Mammary epithelial cell (primary cell): ENCODE measurements at regions of chr17 and their contacts with region 1.

Region 1: GRCh38 chr17:19317359-19318095 is 45.0 kb downstream of the B9D1 start:
- DNase-seq: no peak
- H3K4me3 ChIP-seq: no peak overlapping the region
- H3K27ac ChIP-seq: no peak overlapping the region
- H3K4me1 ChIP-seq: peaks cover 2% of the 10 kb centered on the region
- H3K27me3 ChIP-seq: no peaks in the 10 kb centered on the region
- CTCF ChIP-seq: peak in 1 of 2 donors; percentile 35

Region 2: DNA sequence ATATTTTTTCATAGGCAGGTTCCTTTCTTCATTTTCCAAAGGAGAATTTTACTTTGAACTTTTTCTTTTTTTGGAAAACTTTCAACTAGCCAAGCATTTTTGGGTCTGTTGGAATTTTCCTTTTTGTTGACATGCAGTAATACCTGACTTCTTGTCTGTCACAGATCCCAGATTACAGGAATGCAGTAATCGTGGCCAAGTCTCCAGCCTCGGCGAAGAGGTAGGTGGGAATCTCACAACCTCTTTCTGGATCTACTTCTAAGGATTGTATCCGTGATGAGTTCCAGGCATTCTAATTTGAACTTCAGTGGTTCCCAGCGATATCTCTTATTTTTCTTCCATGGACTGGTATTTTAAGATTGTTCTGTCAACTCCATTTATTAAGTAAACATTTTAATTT is 427.9 kb before region 1 on chr17:
- CTCF ChIA-PET with region 1: no interaction called
- dilution Hi-C with region 1: no loop called
- in situ Hi-C with region 1: no loop called
- intact Hi-C with region 1: no loop called
- DNase-seq: no peak
- H3K4me3 ChIP-seq: no peak overlapping the region
- H3K27ac ChIP-seq: no peak overlapping the region
- H3K4me1 ChIP-seq: no peaks in the 10 kb centered on the region
- H3K27me3 ChIP-seq: no peaks in the 10 kb centered on the region
- CTCF ChIP-seq: no peak

Region 3: GRCh38 chr17:19260958-19261357 is 56.6 kb before region 1 on chr17:
- CTCF ChIA-PET with region 1: no interaction called
- dilution Hi-C with region 1: loop called (anchors 5 kb)
- in situ Hi-C with region 1: no loop called
- intact Hi-C with region 1: no loop called
- DNase-seq: peak; percentile 20
- H3K4me3 ChIP-seq: no peak overlapping the region
- H3K27ac ChIP-seq: no peak overlapping the region
- H3K4me1 ChIP-seq: peaks cover 6% of the 10 kb centered on the region
- H3K27me3 ChIP-seq: no peaks in the 10 kb centered on the region
- CTCF ChIP-seq: peak; percentile 6 to 21

Region 4: DNA sequence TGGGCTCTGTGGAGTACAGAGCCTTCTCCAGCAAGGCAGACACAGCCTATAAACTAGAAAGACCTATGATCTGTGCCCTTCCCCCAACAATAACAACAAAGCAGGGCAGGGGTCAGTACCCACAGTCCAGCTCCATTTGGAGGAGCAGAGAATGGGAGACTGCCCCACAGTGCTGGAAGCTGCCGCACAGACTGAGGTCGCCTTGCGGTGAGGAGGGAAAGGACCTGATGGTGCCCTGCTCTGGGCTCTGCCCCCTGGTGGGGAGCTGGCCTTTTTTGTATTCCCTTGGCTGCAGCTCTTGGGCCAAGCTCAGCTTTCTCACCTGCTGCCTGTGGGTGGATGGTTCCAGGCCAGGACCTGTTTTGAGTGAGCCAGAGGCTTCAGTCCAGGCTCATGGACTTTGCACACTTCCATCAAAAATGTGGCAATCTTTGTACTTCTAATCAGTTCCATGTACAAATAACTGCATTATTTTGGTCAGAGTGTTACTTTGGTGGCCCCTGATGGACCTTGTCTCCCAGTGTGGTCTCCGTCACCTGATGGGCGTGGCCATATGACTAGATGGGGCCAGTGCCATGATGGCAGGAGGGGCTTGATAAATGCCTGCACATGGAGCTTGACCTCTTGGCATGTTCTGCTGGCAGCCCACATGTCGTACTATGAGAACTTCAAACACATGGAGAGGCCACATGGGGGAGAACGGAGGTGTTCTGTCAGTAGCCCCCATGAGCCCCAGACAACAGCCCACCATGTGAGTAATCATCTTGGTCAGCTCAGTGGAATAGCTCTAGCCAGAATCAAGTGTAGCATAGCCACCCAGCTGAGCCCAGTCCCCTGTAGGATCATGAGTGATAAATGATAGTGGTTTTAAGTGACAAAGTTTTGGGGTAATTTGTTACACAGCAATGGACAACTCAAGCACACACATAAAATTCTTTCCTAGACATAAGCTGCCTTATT is 20.8 kb after region 1 on chr17:
- CTCF ChIA-PET with region 1: no interaction called
- dilution Hi-C with region 1: no loop called
- in situ Hi-C with region 1: no loop called
- intact Hi-C with region 1: loop called (anchors 2 kb)
- DNase-seq: peak; percentile 50
- H3K4me3 ChIP-seq: no peak overlapping the region
- H3K27ac ChIP-seq: no peak overlapping the region
- H3K4me1 ChIP-seq: no peaks in the 10 kb centered on the region
- H3K27me3 ChIP-seq: no peaks in the 10 kb centered on the region
- CTCF ChIP-seq: peak; percentile 26 to 49

Region 5: DNA sequence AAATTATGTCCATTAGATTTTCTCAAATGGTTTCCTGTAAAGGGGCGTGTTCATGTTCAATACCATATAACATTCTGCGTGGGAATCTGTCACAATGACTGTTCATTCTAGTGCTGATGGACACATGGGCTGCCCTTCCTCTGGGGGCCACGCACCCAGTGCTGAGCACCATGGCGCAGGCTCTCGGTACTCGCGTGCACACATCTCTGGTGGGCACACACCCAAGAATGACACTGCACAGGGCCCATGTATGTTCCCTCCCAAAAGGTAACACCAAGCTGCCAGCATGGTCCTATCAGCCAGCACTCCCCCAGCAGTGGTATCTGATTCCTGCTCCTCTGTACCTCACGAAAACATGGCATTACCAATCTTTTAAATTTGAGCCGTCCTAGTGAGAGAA is 31.3 kb after region 1 on chr17:
- CTCF ChIA-PET with region 1: no interaction called
- dilution Hi-C with region 1: no loop called
- in situ Hi-C with region 1: no loop called
- intact Hi-C with region 1: no loop called
- DNase-seq: no peak
- H3K4me3 ChIP-seq: no peak overlapping the region
- H3K27ac ChIP-seq: no peak overlapping the region
- H3K4me1 ChIP-seq: peaks cover 14% of the 10 kb centered on the region
- H3K27me3 ChIP-seq: no peaks in the 10 kb centered on the region
- CTCF ChIP-seq: no peak

Region 6: DNA sequence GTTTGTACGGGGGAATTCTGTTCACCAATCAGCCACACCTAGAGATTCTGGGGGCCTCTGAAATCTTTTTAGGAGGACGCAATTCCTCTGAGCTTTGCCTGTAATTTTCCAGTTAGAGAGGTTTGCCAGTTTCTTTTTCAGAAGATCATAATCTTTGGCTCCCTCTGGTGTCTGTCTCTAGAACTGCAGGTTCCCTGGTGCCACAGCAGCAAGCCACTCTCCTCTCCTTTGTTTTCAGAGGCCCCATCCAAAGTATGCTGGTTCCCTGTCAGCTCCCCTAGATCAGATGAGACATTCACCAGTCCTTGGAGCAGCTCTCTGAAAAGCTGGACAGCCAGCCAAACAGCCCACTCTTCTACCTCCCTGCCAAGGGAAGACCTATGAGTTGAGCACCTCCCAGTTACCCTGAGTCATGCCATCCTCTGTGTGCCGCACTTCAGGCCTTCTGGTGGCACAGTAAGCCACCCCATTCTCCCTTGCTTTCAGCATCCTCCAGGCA is 129.6 kb after region 1 on chr17:
- CTCF ChIA-PET with region 1: interaction called, 4 read pairs
- dilution Hi-C with region 1: no loop called
- in situ Hi-C with region 1: no loop called
- intact Hi-C with region 1: loop called (anchors 2 kb)
- DNase-seq: peak; percentile 46
- H3K4me3 ChIP-seq: no peak overlapping the region
- H3K27ac ChIP-seq: no peak overlapping the region
- H3K4me1 ChIP-seq: peaks cover 6% of the 10 kb centered on the region
- H3K27me3 ChIP-seq: no peaks in the 10 kb centered on the region
- CTCF ChIP-seq: peak; percentile 75 to 84

Region 7: DNA sequence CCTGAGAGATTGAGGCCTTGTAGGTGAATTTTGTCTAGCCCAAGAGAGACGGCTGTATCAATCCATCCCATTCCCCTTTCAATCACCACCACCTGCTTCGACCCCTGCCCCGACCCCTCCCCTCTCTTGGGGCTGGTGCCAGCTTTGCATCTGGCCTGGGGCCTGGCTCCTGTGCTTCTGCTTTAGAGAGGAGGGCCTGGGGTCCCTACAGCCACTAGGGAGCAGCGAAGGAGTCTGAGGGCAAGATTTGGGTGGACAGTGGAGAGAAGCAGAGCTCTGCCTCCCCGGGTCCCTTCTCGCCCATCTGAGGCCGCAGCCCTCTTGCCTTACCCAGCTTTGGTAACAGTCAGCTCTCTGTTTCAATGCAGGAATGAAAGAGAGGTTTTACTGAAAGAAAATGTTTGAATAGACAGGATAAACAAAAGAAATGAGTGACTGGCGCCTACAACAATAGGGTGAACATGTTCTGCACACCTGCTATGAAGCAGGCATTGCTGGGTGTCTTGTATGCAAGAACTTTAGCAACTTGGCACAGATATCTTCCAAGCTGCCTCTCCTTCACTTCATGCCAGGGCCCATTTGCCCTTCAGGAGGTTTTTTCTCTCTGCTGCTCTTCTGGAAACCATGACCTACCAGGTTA is 273.5 kb after region 1 on chr17:
- CTCF ChIA-PET with region 1: no interaction called
- dilution Hi-C with region 1: no loop called
- in situ Hi-C with region 1: no loop called
- intact Hi-C with region 1: no loop called
- DNase-seq: no peak
- H3K4me3 ChIP-seq: no peak overlapping the region
- H3K27ac ChIP-seq: no peak overlapping the region
- H3K4me1 ChIP-seq: no peaks in the 10 kb centered on the region
- H3K27me3 ChIP-seq: no peaks in the 10 kb centered on the region
- CTCF ChIP-seq: no peak